ENCODE measurements at regions of chr17 and their contacts with region 1.

Region 1: DNA sequence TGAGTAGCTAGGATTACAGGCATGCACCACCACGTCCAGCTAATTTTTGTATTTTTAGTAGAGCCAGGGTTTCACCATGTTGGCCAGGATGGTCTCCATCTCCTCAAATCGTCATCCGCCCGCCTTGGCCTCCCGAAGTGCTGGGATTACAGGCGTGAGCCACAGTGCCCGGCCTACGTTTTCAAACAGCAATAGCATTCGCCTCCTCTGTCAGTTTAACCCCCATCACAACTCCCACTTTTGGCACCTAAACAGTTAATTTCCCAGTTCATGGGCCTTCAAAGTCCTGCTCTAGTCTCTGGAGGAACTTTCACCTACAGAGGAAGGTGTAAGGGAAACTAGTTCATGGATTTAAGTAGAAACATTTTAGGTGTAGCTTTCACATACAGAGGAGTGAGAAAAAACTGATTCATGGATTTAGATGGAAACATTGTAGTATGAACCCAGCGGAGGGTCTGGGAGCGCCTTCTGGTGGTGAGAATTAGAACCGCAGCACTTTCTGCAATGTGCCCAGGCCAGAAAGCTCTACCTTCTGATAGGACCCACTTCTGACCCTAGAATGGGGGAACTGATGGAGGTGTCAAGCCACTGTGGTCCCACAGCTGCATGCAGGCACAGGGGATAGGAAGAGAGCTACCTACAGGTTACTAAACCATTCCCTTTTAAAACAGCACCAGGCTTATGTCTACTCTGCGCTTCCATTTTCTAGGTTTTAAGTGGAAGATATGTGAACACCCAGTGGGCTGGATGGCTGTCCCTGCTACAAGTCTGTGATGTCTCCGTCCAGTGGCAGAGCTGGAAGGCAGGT is 12.0 kb upstream of the MEOX1 start:
- DNase-seq: peak; percentile 79
- H3K4me3 ChIP-seq: no peak overlapping the region
- H3K27ac ChIP-seq: no peak overlapping the region
- H3K4me1 ChIP-seq: no peaks in the 10 kb centered on the region
- H3K27me3 ChIP-seq: no peaks in the 10 kb centered on the region
- CTCF ChIP-seq: peak; percentile 89 to 97
- POLR2A ChIP-seq: no peak

Region 2: GRCh38 chr17:43517615-43518386 is 155.9 kb before region 1 on chr17:
- CTCF ChIA-PET with region 1: interaction called, 16 read pairs
- POLR2A ChIA-PET with region 1: no interaction called
- dilution Hi-C with region 1: no loop called
- intact Hi-C with region 1: loop called (anchors 1 kb)
- DNase-seq: peak; percentile 72
- H3K4me3 ChIP-seq: no peak overlapping the region
- H3K27ac ChIP-seq: peak overlapping the region; percentile 71
- H3K4me1 ChIP-seq: peaks cover 22% of the 10 kb centered on the region
- H3K27me3 ChIP-seq: no peaks in the 10 kb centered on the region
- CTCF ChIP-seq: no peak
- POLR2A ChIP-seq: no peak

Region 3: DNA sequence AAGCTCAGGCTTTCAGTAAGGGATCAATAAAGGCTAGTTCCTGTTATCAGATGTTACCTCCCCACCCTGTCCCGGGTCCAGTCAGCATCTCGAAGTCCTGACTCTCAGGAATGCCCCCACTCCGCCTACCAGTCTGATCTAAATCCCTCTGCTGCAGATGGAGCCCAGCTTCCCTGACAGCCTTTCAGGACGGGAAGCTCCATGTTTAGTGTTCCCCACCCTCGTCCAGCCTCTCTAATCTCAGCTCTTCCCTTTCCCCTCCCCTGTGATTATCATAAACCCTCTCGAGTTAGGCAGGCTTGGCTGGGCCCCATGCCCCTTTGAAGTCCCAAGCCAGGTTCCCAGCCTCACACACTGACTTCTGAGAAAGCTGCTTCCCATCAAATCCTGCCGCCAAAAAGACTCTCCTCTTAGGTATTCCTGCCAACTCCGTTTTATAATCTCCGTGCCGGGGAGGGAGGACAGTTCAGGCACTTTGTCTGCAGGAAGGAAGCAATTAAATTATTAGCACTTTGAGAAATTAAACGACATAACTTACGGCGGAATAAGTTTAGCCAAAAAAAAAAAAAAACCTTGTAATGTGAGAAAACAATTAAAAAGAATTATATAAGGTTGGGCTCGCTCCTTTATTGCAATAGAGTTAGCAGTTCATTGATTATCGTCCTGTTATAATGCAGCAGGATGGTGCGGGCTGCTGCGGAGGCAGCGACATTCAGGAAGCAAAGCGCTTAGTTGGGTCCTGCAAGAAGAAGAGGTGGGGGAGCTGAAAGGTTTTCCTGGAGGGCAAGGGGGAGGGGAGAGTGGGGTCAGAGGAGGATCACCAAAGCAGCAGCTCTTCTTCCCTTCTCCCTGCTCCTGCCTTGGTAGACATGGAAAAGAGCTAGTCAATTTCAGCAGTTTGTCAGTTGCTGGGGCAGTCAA is 110.8 kb before region 1 on chr17:
- CTCF ChIA-PET with region 1: interaction called, 12 read pairs
- POLR2A ChIA-PET with region 1: no interaction called
- dilution Hi-C with region 1: no loop called
- intact Hi-C with region 1: no loop called
- DNase-seq: no peak
- H3K4me3 ChIP-seq: peak overlapping the region in 1 of 3 experiments; percentile 9
- H3K27ac ChIP-seq: no peak overlapping the region
- H3K4me1 ChIP-seq: peaks cover 7% of the 10 kb centered on the region
- H3K27me3 ChIP-seq: peaks cover 16% of the 10 kb centered on the region in 2 experiments
- CTCF ChIP-seq: no peak
- POLR2A ChIP-seq: no peak

Region 4: DNA sequence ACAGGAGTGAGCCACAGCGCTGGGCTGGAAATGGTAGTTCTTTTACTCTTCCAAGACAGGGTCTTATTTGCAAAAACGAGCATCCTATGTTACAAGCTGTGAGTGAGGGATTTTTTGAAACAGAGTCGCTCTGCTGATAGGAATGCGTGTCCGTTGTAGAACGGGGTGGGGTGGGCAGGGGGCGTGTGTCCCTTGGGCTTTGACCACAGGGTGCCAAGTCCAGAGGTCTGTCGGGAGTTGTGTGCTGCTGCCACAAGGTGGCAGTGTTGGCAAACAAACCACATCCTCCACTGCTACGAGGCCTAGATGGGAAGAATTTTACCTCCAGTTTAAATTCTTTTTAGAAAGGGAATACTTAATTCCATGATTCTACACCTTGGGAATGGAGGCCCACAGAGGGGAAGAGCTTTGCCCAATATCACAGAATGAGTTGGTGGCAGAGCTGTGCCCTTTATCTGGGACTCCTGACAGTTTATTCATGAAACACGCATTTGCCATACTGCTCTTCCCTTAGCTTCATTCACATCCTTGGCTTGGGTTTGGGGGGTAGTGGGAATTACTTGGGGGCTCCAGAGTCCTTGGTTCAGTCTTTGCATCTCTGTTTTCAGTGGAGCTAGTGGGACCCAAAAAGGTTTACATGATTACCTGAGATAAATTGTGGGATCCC is 97.0 kb before region 1 on chr17:
- CTCF ChIA-PET with region 1: interaction called, 595 read pairs
- POLR2A ChIA-PET with region 1: interaction called, 7 read pairs
- dilution Hi-C with region 1: no loop called
- intact Hi-C with region 1: loop called (anchors 1 kb)
- DNase-seq: peak; percentile 81
- H3K4me3 ChIP-seq: no peak overlapping the region
- H3K27ac ChIP-seq: no peak overlapping the region
- H3K4me1 ChIP-seq: peaks cover 19% of the 10 kb centered on the region
- H3K27me3 ChIP-seq: no peaks in the 10 kb centered on the region
- CTCF ChIP-seq: peak; percentile 80 to 83
- POLR2A ChIP-seq: no peak

Region 5: DNA sequence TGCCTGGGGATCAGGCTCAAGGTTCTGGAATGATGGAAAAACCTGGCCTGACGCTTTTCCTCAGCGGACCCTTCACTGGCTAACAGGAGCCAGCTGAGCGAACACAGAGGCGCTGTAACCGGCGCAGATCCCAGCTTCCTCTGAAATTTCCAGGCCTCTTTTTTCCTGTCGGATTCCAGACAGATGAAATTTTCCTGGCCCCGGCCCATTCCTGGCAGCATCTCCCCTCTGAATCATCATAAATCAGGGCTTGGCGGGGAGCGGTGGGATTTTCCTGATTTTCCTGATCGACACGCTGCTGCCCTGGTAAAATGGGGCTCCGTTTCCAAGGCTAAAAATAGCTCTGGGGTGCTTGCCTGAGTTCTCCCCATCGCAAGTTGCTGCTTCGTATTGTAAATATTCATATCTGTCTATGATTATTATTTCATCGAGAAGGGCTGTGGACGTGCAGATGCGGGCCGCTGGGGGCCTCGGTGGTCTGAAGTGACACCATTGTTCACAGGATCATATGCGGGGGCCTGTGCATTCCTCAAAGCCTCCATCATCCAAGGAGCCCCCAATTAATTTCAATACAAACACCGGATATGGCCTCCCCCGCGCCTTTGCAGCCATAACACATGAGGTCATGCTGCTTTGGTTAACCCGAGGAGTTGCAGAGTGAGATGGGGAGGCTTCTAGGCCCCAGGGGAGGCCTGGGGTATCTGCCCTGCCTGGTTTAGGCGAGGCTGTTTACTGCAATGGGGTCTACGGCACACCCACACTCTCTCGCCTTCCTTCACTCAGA is 81.7 kb before region 1 on chr17:
- CTCF ChIA-PET with region 1: interaction called, 24 read pairs
- POLR2A ChIA-PET with region 1: no interaction called
- dilution Hi-C with region 1: no loop called
- intact Hi-C with region 1: no loop called
- DNase-seq: peak; percentile 94
- H3K4me3 ChIP-seq: no peak overlapping the region
- H3K27ac ChIP-seq: peak overlapping the region; percentile 95
- H3K4me1 ChIP-seq: peaks cover 26% of the 10 kb centered on the region
- H3K27me3 ChIP-seq: no peaks in the 10 kb centered on the region
- CTCF ChIP-seq: no peak
- POLR2A ChIP-seq: peak; percentile 62

Region 6: GRCh38 chr17:43634591-43635125 is 39.1 kb before region 1 on chr17:
- CTCF ChIA-PET with region 1: interaction called, 16 read pairs
- POLR2A ChIA-PET with region 1: no interaction called
- dilution Hi-C with region 1: no loop called
- intact Hi-C with region 1: no loop called
- DNase-seq: no peak
- H3K4me3 ChIP-seq: no peak overlapping the region
- H3K27ac ChIP-seq: no peak overlapping the region
- H3K4me1 ChIP-seq: peaks cover 8% of the 10 kb centered on the region
- H3K27me3 ChIP-seq: no peaks in the 10 kb centered on the region
- CTCF ChIP-seq: no peak
- POLR2A ChIP-seq: no peak

Region 7: GRCh38 chr17:43661699-43662412 is 11.9 kb before region 1 on chr17 and contains the start of gene MEOX1:
- CTCF ChIA-PET with region 1: interaction called, 21 read pairs
- POLR2A ChIA-PET with region 1: no interaction called
- dilution Hi-C with region 1: no loop called
- intact Hi-C with region 1: no loop called
- DNase-seq: no peak
- H3K4me3 ChIP-seq: no peak within 1 kb of the TSS
- H3K27ac ChIP-seq: no peak within 1 kb of the TSS
- H3K4me1 ChIP-seq: no peaks in the 10 kb centered on the region
- H3K27me3 ChIP-seq: no peaks in the 10 kb centered on the region
- CTCF ChIP-seq: no peak
- POLR2A ChIP-seq: no peak
- total RNA-seq, gene MEOX1: 0.14 TPM in 1 of 2 replicates, not detected in the other

Measured in endothelial cell of umbilical vein (primary cell).